K562 (cell line): ENCODE measurements at regions of chr16 and their contacts with region 1.

Region 1: GRCh38 chr16:30065143-30065850 is at the start of gene ALDOA:
- DNase-seq: peak; percentile 88 to 99 (median 92)
- ATAC-seq: peak; percentile 92
- H3K4me3 ChIP-seq: peak within 1 kb of the TSS; percentile 88
- H3K27ac ChIP-seq: peak within 1 kb of the TSS; percentile 99
- H3K4me1 ChIP-seq: peaks cover 46 to 65% of the 10 kb centered on the region in 2 experiments
- H3K27me3 ChIP-seq: no peaks in the 10 kb centered on the region
- CTCF ChIP-seq: no peak
- EP300 ChIP-seq: peak; percentile 53; the same call in 1 of the 2 replicates
- POLR2A ChIP-seq: peak; percentile 99
- RAD21 ChIP-seq: no peak
- polyA plus RNA-seq, gene ALDOA: 311 to 650 TPM

Region 2: DNA sequence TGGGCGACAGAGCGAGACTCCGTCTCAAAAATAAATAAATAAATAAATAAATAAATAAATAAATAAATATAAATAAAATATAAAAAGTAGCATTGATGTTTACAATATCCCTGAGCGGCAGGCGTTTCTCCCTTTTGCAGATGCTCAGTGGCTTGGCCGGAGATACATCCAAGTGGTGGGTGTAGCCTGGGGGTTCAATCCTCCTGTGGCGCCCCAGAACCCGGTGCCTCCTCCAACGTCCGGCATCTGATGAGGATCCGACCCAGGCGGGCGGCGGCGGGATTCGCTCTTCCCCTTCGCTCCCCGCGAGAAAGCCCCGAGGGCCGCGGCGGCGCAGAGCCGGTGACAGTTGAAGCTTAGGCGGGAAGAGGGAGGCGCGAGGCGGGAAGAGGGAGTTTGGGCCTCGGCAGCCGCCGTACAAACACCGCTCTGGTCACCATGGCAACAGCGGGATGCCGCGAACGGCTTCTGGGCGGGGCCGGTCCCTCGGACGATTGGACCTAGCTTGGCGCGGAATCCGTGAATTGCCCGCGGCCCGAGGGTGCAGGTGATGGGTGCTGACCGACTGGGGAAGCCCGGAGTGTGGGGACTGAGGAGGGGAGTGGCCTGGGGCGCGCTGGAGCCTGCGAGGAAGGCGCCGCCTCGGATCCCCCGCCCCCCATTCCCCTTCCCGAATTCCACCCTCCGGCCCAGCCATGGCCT is 12.5 kb before region 1 on chr16:
- CTCF ChIA-PET with region 1: no interaction called
- POLR2A ChIA-PET with region 1: interaction called, 29 read pairs
- in situ Hi-C with region 1: no loop called
- intact Hi-C with region 1: no loop called
- DNase-seq: peak; percentile 95 to 97 (median 96)
- ATAC-seq: peak; percentile 84
- H3K4me3 ChIP-seq: peak overlapping the region; percentile 56
- H3K27ac ChIP-seq: peak overlapping the region; percentile 87
- H3K4me1 ChIP-seq: peaks cover 19 to 32% of the 10 kb centered on the region in 2 experiments
- H3K27me3 ChIP-seq: no peaks in the 10 kb centered on the region
- CTCF ChIP-seq: no peak
- EP300 ChIP-seq: peak; percentile 80
- POLR2A ChIP-seq: peak; percentile 57
- RAD21 ChIP-seq: no peak

Region 3: DNA sequence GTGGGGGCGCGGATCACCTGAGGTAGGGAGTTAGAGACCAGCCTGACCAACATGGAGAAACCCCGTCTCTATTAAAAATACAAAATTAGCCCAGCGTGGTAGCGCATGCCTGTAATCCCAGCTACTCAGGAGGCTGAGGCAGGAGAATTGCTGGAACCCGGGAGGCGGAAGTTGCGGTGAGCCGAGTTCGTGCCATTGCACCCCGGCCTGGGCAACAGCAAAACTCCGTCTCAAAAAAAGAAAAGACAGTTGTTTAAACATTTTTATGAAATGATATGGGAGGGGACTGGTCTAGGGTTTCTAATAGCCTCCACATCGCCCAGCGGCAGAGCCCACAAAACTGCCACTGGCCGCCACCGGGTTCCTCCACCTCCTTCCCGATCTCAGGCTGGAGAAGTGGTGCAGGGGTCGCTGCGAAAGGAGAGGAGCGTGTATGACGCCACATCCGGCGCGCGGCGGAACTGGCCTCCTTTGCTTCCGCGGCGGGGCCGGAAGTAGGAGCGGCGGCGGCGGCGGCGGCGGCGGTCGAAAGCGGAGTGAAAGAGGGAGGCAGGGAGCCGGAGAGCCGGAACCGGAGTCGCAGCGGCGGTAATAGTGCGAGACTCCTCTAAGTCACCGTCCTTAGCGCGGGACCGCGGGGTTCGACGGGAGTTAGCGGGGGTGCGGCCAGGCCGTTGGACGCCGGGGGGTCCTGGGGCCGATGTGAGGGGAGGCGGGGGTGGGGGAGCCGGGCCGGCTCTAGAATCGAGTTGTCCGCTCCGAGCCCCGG is 10.4 kb after region 1 on chr16 and contains the start of gene PPP4C:
- CTCF ChIA-PET with region 1: no interaction called
- POLR2A ChIA-PET with region 1: interaction called, 12 read pairs
- in situ Hi-C with region 1: no loop called
- intact Hi-C with region 1: no loop called
- DNase-seq: peak; percentile 82 to 95 (median 89)
- ATAC-seq: peak; percentile 90
- H3K4me3 ChIP-seq: peak within 1 kb of the TSS; percentile 94
- H3K27ac ChIP-seq: peak within 1 kb of the TSS; percentile 97
- H3K4me1 ChIP-seq: peaks cover 16 to 24% of the 10 kb centered on the region in 2 experiments
- H3K27me3 ChIP-seq: no peaks in the 10 kb centered on the region
- CTCF ChIP-seq: 0 out of 6 replicates have a peak, but pooled peaks of 1 of the 3 experiments have one; percentile 8
- EP300 ChIP-seq: peak; percentile 12; the same call in 1 of the 2 replicates
- POLR2A ChIP-seq: peak; percentile 98
- RAD21 ChIP-seq: no peak
- polyA plus RNA-seq, gene PPP4C: 3.5 to 10.7 TPM

Region 4: DNA sequence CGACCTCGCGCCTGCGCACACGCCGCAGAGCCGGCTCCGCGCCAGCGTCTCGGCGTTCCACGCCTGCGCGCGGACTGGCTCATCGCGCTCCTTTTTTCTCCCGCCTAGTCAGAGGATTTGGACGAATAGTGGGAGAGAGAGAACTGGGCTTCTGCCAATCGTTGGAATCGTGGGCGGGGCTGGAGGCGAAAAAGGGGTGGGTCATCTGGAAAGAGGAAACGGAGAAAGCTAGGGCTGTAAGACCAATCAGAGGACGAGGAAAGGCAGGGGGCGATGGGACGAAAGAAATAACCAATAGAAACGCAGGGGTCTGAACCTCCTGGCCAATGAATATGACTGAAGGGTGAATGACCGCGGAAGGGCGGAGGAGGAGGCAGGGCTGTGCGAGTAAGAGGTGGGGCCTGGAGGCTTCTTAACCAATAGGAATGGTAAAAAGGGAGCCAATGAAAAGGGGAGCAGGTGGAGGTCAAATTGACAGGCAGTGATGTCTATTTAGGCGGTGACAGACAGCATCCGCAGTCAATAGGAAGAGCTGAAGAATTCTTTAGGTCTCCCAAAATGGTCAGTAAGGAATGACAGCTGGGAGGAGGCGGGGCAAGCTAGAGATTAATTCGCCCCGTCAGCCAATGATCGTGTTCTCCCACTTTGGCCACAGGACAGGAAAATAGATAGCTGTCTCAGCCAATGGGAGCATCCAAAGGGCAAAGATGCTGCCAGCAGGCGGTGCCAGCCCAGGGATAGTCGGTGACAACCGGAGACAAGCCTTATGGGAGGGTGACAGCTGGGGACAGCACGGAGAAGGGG is 305.3 kb after region 1 on chr16 and contains the start of gene TBC1D10B:
- CTCF ChIA-PET with region 1: no interaction called
- POLR2A ChIA-PET with region 1: no interaction called
- in situ Hi-C with region 1: no loop called
- intact Hi-C with region 1: loop called (anchors 10 kb)
- DNase-seq: peak; percentile 92 to 99 (median 96)
- ATAC-seq: peak; percentile 93
- H3K4me3 ChIP-seq: peak within 1 kb of the TSS; percentile 74
- H3K27ac ChIP-seq: peak within 1 kb of the TSS; percentile 74
- H3K4me1 ChIP-seq: peaks cover 25 to 44% of the 10 kb centered on the region in 2 experiments; a peak in 4 of 5 replicates
- H3K27me3 ChIP-seq: no peaks in the 10 kb centered on the region
- CTCF ChIP-seq: peak; percentile 29 to 47 (median 44); a peak in 4 of 6 replicates
- EP300 ChIP-seq: no peak
- POLR2A ChIP-seq: no peak
- RAD21 ChIP-seq: no peak
- polyA plus RNA-seq, gene TBC1D10B: 2.2 to 2.3 TPM

Region 5: DNA sequence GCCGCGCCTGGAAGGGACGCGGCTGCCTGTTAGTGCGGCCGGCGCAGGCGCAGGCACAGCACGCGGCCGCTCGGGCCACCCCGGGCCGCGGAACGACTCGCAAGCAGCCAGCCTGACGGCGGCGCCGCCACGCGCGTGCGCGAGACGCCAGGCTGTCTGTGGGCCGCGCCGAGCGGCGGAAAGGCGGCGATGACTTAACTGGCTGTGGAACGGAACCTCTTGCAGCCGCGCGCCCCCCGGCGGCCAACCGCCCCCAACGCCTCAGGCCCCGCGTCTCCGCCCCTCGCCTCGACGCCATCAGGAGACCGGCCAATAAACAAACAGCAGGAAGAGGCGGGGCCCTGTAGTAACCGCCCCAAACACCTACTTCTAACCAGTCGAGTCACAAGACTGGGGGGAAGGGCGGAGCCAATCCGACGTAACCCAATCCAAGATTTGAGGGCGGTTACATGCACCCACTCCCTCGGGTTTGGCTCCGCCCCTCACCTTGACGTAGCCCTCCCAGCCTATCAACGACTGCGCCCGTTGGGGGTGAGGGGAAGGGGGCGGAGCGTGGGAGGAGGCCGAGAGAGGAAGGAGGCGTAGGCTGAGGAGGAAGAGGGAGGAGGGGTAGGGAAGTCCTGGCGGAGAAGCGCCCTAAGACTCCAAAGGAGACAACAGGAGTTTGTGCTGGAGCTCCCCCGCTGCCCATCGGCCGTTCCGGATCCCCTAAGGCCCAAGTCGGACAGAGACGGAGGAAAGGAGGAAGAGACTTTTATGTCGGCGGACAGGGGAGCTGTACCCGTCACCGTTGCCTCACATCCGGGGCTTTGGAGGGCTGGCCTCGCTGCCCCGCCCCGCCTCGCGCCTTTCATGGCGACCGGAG is 592.8 kb after region 1 on chr16 and contains the start of gene FBRS:
- CTCF ChIA-PET with region 1: no interaction called
- POLR2A ChIA-PET with region 1: no interaction called
- in situ Hi-C with region 1: no loop called
- intact Hi-C with region 1: loop called (anchors 10 kb)
- DNase-seq: peak; percentile 93 to 100 (median 96)
- ATAC-seq: peak; percentile 88
- H3K4me3 ChIP-seq: peak within 1 kb of the TSS; percentile 90
- H3K27ac ChIP-seq: peak within 1 kb of the TSS; percentile 99
- H3K4me1 ChIP-seq: peaks cover 20 to 52% of the 10 kb centered on the region in 2 experiments; a peak in 4 of 5 replicates
- H3K27me3 ChIP-seq: no peaks in the 10 kb centered on the region
- CTCF ChIP-seq: peak; percentile 90 to 97 (median 90)
- EP300 ChIP-seq: no peak
- POLR2A ChIP-seq: peak; percentile 95
- RAD21 ChIP-seq: peak; percentile 78 to 82
- polyA plus RNA-seq, gene FBRS: 0.32 to 0.46 TPM